ENCODE measurements at regions of chr16 and their contacts with region 1.

Region 1: GRCh38 chr16:24139282-24139681 is 116.9 kb upstream of the CACNG3 start:
- DNase-seq: no peak
- ATAC-seq: no peak
- H3K4me3 ChIP-seq: no peak overlapping the region
- H3K27ac ChIP-seq: no peak overlapping the region
- H3K4me1 ChIP-seq: no peaks in the 10 kb centered on the region
- H3K27me3 ChIP-seq: no peaks in the 10 kb centered on the region
- CTCF ChIP-seq: no peak
- POLR2A ChIP-seq: no peak

Region 2: GRCh38 chr16:24116989-24117388 is 22.3 kb before region 1 on chr16:
- in situ Hi-C with region 1: no loop called
- intact Hi-C with region 1: no loop called
- DNase-seq: no peak
- ATAC-seq: no peak
- H3K4me3 ChIP-seq: no peak overlapping the region
- H3K27ac ChIP-seq: no peak overlapping the region
- H3K4me1 ChIP-seq: no peaks in the 10 kb centered on the region
- H3K27me3 ChIP-seq: no peaks in the 10 kb centered on the region
- CTCF ChIP-seq: no peak
- POLR2A ChIP-seq: no peak

Region 3: DNA sequence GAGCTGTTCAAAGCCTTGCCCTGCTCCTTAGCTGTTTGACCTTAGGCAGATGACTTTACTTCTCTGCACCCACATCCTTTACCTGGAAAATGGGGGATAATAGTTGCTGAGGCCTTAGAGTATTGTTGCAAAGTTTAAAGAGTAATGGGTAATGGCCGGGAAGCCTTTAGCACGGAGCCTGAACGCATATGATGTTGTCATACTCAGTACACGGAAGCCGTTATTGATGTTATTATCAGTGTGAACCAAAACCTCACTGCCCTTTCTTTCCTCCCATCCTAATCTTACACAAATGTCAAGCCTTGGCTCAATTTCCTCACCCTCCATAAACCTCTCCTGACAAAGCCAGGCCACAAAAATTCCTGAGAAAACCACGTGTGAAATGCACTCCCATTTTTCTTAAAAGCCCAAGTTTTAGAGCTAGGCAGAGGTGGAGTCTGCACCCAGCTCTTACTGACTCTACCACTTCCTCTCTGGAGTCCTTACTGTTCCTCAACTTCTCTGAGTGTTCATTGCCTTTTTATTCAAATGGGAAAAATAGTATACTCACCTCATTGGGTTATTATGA is 49.6 kb after region 1 on chr16:
- in situ Hi-C with region 1: no loop called
- intact Hi-C with region 1: no loop called
- DNase-seq: no peak
- ATAC-seq: no peak
- H3K4me3 ChIP-seq: no peak overlapping the region
- H3K27ac ChIP-seq: no peak overlapping the region
- H3K4me1 ChIP-seq: no peaks in the 10 kb centered on the region
- H3K27me3 ChIP-seq: no peaks in the 10 kb centered on the region
- CTCF ChIP-seq: no peak
- POLR2A ChIP-seq: no peak

Region 4: GRCh38 chr16:24228514-24228913 is 89.2 kb after region 1 on chr16:
- in situ Hi-C with region 1: loop called in 1 of 4 experiments (anchors 25 kb)
- intact Hi-C with region 1: no loop called
- DNase-seq: no peak
- ATAC-seq: no peak
- H3K4me3 ChIP-seq: no peak overlapping the region
- H3K27ac ChIP-seq: no peak overlapping the region
- H3K4me1 ChIP-seq: no peaks in the 10 kb centered on the region
- H3K27me3 ChIP-seq: no peaks in the 10 kb centered on the region
- CTCF ChIP-seq: no peak
- POLR2A ChIP-seq: no peak

Measured in gastrocnemius medialis (tissue), 4 donors.